PC-9 (cell line): ENCODE measurements at regions of chr14 and their contacts with region 1.

Region 1: DNA sequence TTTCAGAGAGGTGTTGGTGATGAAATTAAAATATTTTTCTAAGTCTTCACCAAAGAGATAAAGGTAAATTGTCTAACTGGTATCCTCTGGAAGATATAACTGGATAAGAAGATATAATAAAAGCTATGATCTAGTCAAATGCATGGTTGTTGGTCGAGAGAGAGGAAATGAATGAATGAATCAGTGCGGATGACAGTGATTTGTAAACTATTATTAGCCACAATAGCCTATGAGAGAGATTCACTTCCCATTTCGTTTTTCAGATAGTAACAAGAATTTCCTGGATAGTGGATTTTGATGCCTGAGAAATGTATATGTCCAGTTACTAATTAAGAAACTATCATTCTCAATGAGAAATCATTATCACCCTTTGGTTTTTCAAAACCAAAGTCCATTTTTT is 63.1 kb downstream of the HEATR5A start:
- DNase-seq: no peak
- H3K4me3 ChIP-seq: no peak overlapping the region
- H3K27ac ChIP-seq: no peak overlapping the region
- H3K4me1 ChIP-seq: peaks cover 23% of the 10 kb centered on the region
- H3K27me3 ChIP-seq: no peaks in the 10 kb centered on the region
- CTCF ChIP-seq: no peak

Region 2: GRCh38 chr14:30223385-30223813 is 1133.9 kb before region 1 on chr14:
- CTCF ChIA-PET with region 1: no interaction called
- POLR2A ChIA-PET with region 1: interaction called, 11 read pairs
- intact Hi-C with region 1: no loop called
- DNase-seq: peak; percentile 82 to 93
- H3K4me3 ChIP-seq: no peak overlapping the region
- H3K27ac ChIP-seq: peak overlapping the region; percentile 76
- H3K4me1 ChIP-seq: peaks cover 50% of the 10 kb centered on the region
- H3K27me3 ChIP-seq: no peaks in the 10 kb centered on the region
- CTCF ChIP-seq: no peak

Region 3: DNA sequence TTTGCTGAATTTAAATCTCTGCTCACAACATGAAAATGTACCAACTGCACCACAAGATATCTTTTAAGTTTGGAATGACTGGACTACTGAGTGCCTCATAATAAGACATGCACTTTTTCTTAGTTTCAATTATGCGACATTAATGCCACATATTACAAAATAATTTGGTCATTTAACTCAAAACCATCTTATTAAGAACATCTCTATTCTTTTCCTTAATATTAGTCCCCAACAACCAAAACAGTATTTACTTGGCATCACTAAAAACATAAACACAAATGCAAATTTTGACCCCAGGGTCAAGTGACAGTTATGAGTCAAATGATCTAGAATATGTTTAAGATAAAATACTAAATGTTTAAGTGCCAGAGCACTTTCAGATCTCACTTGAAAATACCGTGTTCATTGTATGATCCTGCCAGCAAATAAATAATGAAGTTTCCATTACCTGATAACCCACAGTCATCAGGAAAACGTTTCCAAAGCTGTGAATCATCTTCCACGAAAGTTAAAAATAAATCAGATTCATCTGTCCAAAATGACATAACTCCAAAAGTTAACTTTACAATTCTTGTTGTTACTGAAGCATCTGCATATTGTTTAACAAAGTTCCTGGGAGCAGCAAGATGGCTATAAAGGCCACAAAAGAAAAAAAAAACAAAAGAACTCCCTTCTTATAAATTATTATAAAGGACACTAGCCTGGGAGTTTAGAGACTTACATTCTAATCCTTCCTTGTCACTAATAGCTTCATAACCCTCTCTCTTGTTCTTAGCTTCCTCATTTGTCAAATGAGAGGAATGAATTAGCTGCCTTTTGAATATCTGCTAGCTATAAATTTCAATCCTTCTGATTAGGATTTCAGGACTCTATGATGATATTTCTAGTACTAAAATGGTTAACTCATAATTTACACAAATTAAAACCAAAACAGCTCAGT is 362.3 kb before region 1 on chr14:
- CTCF ChIA-PET with region 1: no interaction called
- POLR2A ChIA-PET with region 1: no interaction called
- intact Hi-C with region 1: no loop called
- DNase-seq: no peak
- H3K4me3 ChIP-seq: no peak overlapping the region
- H3K27ac ChIP-seq: no peak overlapping the region
- H3K4me1 ChIP-seq: no peaks in the 10 kb centered on the region
- H3K27me3 ChIP-seq: no peaks in the 10 kb centered on the region
- CTCF ChIP-seq: no peak

Region 4: GRCh38 chr14:31122098-31122611 is 235.1 kb before region 1 on chr14:
- CTCF ChIA-PET with region 1: no interaction called
- POLR2A ChIA-PET with region 1: no interaction called
- intact Hi-C with region 1: no loop called
- DNase-seq: no peak
- H3K4me3 ChIP-seq: no peak overlapping the region
- H3K27ac ChIP-seq: no peak overlapping the region
- H3K4me1 ChIP-seq: no peaks in the 10 kb centered on the region
- H3K27me3 ChIP-seq: no peaks in the 10 kb centered on the region
- CTCF ChIP-seq: no peak

Region 5: GRCh38 chr14:31137214-31137889 is 219.9 kb before region 1 on chr14:
- CTCF ChIA-PET with region 1: no interaction called
- POLR2A ChIA-PET with region 1: no interaction called
- intact Hi-C with region 1: loop called (anchors 10 kb)
- DNase-seq: no peak
- H3K4me3 ChIP-seq: no peak overlapping the region
- H3K27ac ChIP-seq: no peak overlapping the region
- H3K4me1 ChIP-seq: no peaks in the 10 kb centered on the region
- H3K27me3 ChIP-seq: no peaks in the 10 kb centered on the region
- CTCF ChIP-seq: no peak

Region 6: DNA sequence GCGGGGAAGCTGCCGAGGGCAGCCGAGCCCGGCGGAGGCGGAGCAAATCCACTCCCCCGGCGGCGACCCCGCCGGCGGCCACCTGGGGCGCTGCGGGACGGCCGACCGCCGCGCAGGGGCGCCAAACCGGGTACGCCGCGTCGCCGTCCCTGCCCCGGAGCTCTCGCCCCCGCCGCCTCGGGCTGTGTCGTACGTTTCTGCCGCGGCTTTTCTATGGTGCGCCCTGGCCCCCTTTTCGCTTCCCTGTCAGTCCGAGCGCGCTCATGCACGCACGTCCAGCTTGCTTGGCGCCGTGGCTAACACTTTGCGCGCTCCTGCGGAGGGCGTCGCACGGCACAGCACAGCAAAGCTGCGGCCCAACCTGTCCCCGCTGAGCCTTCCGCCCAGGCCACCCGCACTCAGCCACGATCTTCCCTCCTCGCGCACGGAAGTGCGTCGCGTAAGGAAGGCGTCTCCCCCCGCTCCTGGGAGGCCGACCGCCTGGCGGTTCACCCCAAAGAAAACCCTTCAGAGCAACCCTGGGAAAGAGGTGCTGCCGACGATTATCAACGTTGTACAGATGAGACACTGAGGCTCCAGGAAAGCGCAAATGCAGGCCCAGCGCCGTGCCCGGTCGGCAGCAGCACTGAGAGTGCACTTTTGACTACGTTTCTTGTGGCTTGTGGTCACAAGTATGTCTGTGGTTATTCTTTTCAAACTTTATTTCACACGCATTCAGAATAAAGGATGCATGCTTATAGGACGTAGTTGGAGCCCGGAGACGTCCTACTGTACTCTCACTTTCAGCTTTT is 149.3 kb before region 1 on chr14 and contains the start of gene HECTD1:
- CTCF ChIA-PET with region 1: no interaction called
- POLR2A ChIA-PET with region 1: no interaction called
- intact Hi-C with region 1: loop called (anchors 2 kb)
- DNase-seq: peak; percentile 61 to 86
- H3K4me3 ChIP-seq: peak within 1 kb of the TSS; percentile 82
- H3K27ac ChIP-seq: peak within 1 kb of the TSS; percentile 87
- H3K4me1 ChIP-seq: peaks cover 28% of the 10 kb centered on the region
- H3K27me3 ChIP-seq: no peaks in the 10 kb centered on the region
- CTCF ChIP-seq: peak; percentile 36; the same call in 1 of the 2 replicates
- total RNA-seq, gene HECTD1: 93.9 and 94.4 TPM in 2 replicates

Region 7: DNA sequence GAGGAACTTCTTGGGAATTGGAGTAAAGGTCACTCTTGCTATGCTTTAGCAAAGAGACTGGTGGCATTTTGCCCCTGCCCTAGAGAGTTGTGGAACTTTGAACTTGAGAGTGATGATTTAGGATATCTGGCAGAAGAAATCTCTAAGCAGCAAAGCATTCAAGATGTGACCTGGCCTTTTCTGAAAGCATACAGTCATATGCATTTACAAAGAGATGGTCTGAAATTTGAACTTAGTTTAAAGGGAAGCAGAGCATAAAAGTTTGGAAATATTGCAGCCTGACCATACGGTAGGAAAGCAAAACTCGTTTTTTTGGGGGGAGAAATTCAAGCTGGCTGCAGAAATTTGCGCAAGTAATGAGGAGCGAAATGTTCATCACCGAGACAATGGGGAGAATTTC is 264.8 kb after region 1 on chr14:
- CTCF ChIA-PET with region 1: no interaction called
- POLR2A ChIA-PET with region 1: no interaction called
- intact Hi-C with region 1: no loop called
- DNase-seq: no peak
- H3K4me3 ChIP-seq: no peak overlapping the region
- H3K27ac ChIP-seq: no peak overlapping the region
- H3K4me1 ChIP-seq: no peaks in the 10 kb centered on the region
- H3K27me3 ChIP-seq: no peaks in the 10 kb centered on the region
- CTCF ChIP-seq: no peak